ENCODE measurements at regions of chr7 and their contacts with region 1.

Region 1: GRCh38 chr7:1412322-1413261 is 46.7 kb downstream of the MICALL2 start:
- DNase-seq: peak; percentile 92
- H3K4me3 Mint-ChIP-seq: no peak overlapping the region
- H3K27ac Mint-ChIP-seq: no peak overlapping the region
- H3K4me1 Mint-ChIP-seq: peaks cover 16% of the 10 kb centered on the region
- H3K27me3 Mint-ChIP-seq: peaks cover 6% of the 10 kb centered on the region

Region 2: DNA sequence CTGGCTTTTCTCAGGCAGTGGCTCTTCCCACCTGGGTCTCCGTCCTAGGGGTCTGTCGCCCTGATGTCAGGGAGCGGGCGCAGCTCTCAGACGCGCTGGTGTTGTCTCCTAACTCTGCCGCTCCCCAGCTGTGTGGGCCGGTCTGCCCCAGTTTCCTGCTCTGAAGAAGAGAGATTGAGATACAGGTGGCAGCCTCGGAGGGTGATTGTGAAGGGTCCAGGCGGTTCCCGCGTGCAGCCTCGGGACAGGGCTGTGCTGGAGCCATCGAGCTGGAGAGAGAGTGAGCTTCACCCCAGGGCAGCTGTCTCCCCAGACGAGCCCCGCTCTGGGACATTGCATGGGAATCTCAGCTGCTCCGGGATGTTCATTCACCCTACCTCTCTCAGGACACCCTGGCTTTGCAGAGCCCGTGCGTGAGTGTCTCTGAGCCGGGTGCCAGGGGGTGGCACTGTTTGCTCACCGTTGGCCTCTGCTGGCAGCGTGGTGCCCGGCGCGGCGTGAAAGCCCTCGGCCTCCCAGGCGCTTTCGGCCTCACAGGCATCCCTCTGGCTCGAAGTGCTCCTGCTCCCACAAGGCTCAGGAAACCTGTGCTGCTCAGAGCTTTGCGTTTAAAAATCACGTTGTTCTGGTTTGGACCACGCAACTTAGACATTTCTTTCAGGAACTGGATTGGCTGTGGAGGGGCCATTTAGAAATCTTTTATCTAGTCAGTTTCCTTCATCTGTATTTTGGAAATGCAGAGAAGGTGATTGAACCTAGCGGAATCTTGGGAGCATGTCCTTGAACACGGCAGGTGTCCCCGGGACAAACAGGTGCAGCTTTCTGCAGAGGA is 218.8 kb before region 1 on chr7:
- CTCF ChIA-PET with region 1: interaction called, 3 read pairs
- POLR2A ChIA-PET with region 1: no interaction called
- intact Hi-C with region 1: loop called (anchors 5 kb)
- DNase-seq: peak; percentile 59
- H3K4me3 Mint-ChIP-seq: no peak overlapping the region
- H3K27ac Mint-ChIP-seq: no peak overlapping the region
- H3K4me1 Mint-ChIP-seq: peaks cover 7% of the 10 kb centered on the region
- H3K27me3 Mint-ChIP-seq: peaks cover 12% of the 10 kb centered on the region

Region 3: GRCh38 chr7:1225441-1226185 is 187.0 kb before region 1 on chr7:
- CTCF ChIA-PET with region 1: interaction called, 4 read pairs
- POLR2A ChIA-PET with region 1: no interaction called
- intact Hi-C with region 1: loop called (anchors 5 kb)
- DNase-seq: peak; percentile 51
- H3K4me3 Mint-ChIP-seq: no peak overlapping the region
- H3K27ac Mint-ChIP-seq: peak overlapping the region; percentile 62
- H3K4me1 Mint-ChIP-seq: no peaks in the 10 kb centered on the region
- H3K27me3 Mint-ChIP-seq: peaks cover 58% of the 10 kb centered on the region

Region 4: DNA sequence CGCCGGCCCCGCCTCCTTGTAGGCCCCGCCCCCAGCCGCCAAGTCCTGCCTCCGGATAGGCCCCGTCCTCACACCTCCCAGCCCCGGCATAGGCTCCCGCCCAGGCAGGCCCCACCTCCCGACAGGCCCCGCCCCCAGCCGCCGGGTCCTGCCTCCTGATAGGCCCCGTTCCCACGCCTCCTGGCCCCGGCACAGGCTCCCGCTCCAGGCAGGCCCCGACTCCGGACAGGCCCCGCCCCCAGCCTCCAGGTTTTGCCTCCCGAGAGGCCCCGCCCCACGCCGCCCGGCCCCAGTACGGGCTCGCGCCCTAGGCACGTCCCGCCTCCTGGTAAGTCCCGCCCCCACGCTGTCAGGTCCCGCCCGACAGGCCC is 46.9 kb after region 1 on chr7:
- CTCF ChIA-PET with region 1: no interaction called
- POLR2A ChIA-PET with region 1: no interaction called
- intact Hi-C with region 1: loop called (anchors 1 kb)
- DNase-seq: peak; percentile 99
- H3K4me3 Mint-ChIP-seq: peak overlapping the region; percentile 72
- H3K27ac Mint-ChIP-seq: no peak overlapping the region
- H3K4me1 Mint-ChIP-seq: peaks cover 9% of the 10 kb centered on the region
- H3K27me3 Mint-ChIP-seq: no peaks in the 10 kb centered on the region

Region 5: GRCh38 chr7:1473864-1474512 is 61.4 kb after region 1 on chr7:
- CTCF ChIA-PET with region 1: interaction called, 6 read pairs
- POLR2A ChIA-PET with region 1: no interaction called
- intact Hi-C with region 1: loop called (anchors 1 kb)
- DNase-seq: peak; percentile 91
- H3K4me3 Mint-ChIP-seq: no peak overlapping the region
- H3K27ac Mint-ChIP-seq: no peak overlapping the region
- H3K4me1 Mint-ChIP-seq: peaks cover 3% of the 10 kb centered on the region
- H3K27me3 Mint-ChIP-seq: no peaks in the 10 kb centered on the region